ENCODE measurements at regions of chr6 and their contacts with region 1.

Region 1: DNA sequence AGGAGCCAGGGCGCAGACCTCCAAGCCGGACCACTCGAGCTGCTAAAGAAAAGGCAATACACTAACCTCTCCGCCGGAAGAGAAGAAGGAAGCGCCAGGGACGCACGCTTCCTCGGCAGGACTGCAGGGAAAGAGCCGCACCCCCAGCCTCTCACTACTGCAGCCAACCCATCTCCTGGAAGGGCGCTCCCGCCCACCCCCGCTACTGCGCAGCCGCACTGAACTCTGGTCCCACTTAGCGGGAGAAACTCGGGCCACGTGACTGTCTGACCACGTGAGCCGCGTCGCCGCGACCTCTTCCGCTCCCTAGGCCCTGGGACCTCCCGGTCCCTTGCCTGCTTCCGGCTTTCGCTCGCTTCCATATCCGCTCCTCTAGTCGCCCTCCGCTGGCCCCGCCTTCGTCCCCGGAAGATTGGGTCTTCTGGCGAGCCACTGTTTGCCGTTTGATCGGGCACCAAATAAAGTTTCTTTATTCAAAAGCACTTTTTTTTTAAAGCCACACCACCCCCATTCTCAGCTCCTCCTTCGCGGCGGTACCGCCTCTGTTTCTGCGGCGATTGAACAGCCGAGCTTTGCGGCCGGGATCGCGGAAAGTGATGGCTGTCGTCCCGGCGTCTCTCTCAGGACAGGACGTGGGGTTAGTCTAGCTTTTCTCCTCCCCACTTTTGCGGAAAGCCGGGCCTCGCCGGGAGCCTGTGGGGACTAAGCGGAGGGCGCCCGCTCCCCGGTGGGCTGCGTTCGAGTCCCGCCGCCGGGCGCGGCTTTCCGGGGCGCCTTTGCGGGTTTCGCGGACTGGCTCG is at the start of gene RMND1:
- DNase-seq: peak; percentile 92 to 99 (median 99)
- ATAC-seq: peak; percentile 98
- H3K4me3 ChIP-seq: peak within 1 kb of the TSS; percentile 90
- H3K4me3 Mint-ChIP-seq: peak within 1 kb of the TSS; percentile 90 to 98 (median 96)
- H3K27ac ChIP-seq: peak within 1 kb of the TSS; percentile 86
- H3K27ac Mint-ChIP-seq: peak within 1 kb of the TSS; percentile 83 to 98 (median 92)
- H3K4me1 ChIP-seq: peaks cover 15 to 20% of the 10 kb centered on the region in 2 donors
- H3K4me1 Mint-ChIP-seq: peaks cover 36 to 68% (median 54%) of the 10 kb centered on the region in 7 donors
- H3K27me3 ChIP-seq: no peaks in the 10 kb centered on the region
- H3K27me3 Mint-ChIP-seq: peaks cover 0 to 5% (median 0%) of the 10 kb centered on the region in 5 donors
- total RNA-seq, gene RMND1: 8.8 to 21.5 (median 18.7) TPM

Region 2: GRCh38 chr6:149565527-149566409 is 1886.4 kb before region 1 on chr6 and contains the start of gene GINM1:
- CTCF ChIA-PET with region 1: no interaction called
- POLR2A ChIA-PET with region 1: no interaction called
- intact Hi-C with region 1: loop called in 1 of 2 experiments (anchors 5 kb)
- DNase-seq: peak; percentile 92 to 99 (median 96)
- ATAC-seq: peak; percentile 94
- H3K4me3 ChIP-seq: peak within 1 kb of the TSS; percentile 89
- H3K4me3 Mint-ChIP-seq: peak within 1 kb of the TSS; percentile 93 to 99 (median 97)
- H3K27ac ChIP-seq: peak within 1 kb of the TSS; percentile 95
- H3K27ac Mint-ChIP-seq: peak within 1 kb of the TSS; percentile 87 to 97 (median 97)
- H3K4me1 ChIP-seq: peaks cover 0 to 6% of the 10 kb centered on the region in 2 donors
- H3K4me1 Mint-ChIP-seq: peaks cover 3 to 39% (median 19%) of the 10 kb centered on the region in 7 donors
- H3K27me3 ChIP-seq: no peaks in the 10 kb centered on the region
- H3K27me3 Mint-ChIP-seq: peaks cover 0 to 7% (median 0%) of the 10 kb centered on the region in 5 donors
- total RNA-seq, gene GINM1: 14.4 to 27.3 (median 19.9) TPM

Region 3: GRCh38 chr6:150865406-150866146 is 586.6 kb before region 1 on chr6 and contains the start of gene MTHFD1L:
- CTCF ChIA-PET with region 1: no interaction called
- POLR2A ChIA-PET with region 1: no interaction called
- intact Hi-C with region 1: loop called (anchors 1 to 2 kb)
- DNase-seq: peak; percentile 46 to 84 (median 55)
- ATAC-seq: peak; percentile 83
- H3K4me3 ChIP-seq: peak within 1 kb of the TSS; percentile 72
- H3K4me3 Mint-ChIP-seq: peak within 1 kb of the TSS; percentile 83 to 97 (median 88)
- H3K27ac ChIP-seq: peak within 1 kb of the TSS; percentile 61
- H3K27ac Mint-ChIP-seq: peak within 1 kb of the TSS in 8 of 9 donors; percentile 28 to 89 (median 70)
- H3K4me1 ChIP-seq: peaks cover 5 to 6% of the 10 kb centered on the region in 2 donors
- H3K4me1 Mint-ChIP-seq: peaks cover 10 to 44% (median 14%) of the 10 kb centered on the region in 7 donors
- H3K27me3 ChIP-seq: no peaks in the 10 kb centered on the region
- H3K27me3 Mint-ChIP-seq: peaks cover 8 to 18% (median 16%) of the 10 kb centered on the region in 5 donors
- total RNA-seq, gene MTHFD1L: 6.4 to 57.8 (median 9.3) TPM

Region 4: DNA sequence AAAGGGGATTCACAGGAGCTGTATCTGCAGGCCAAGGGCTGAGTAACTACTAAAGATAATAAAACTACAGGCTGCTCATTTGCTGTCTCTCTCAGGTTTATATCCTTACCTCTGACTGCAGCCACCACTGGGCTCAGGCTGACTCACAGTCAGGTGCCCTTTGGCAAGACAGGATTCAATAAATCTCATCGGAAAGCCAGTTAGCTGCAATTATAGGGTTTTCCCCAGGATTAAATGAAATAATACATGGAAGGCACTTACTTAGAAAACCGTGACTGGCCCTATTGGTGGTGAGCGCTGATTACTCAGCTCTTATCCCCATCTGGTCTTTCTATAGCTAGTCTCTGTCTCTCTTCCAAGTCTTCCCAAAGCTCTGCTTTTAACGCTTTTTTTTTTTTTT is 26.6 kb before region 1 on chr6:
- CTCF ChIA-PET with region 1: no interaction called
- POLR2A ChIA-PET with region 1: no interaction called
- intact Hi-C with region 1: no loop called
- DNase-seq: no peak
- ATAC-seq: no peak
- H3K4me3 ChIP-seq: no peak overlapping the region
- H3K4me3 Mint-ChIP-seq: no peak overlapping the region
- H3K27ac ChIP-seq: no peak overlapping the region
- H3K27ac Mint-ChIP-seq: peak overlapping the region in 1 of 9 donors; percentile 58
- H3K4me1 ChIP-seq: no peaks in the 10 kb centered on the region
- H3K4me1 Mint-ChIP-seq: peaks cover 0 to 3% (median 0%) of the 10 kb centered on the region in 7 donors
- H3K27me3 ChIP-seq: no peaks in the 10 kb centered on the region
- H3K27me3 Mint-ChIP-seq: no peaks in the 10 kb centered on the region

Region 5: GRCh38 chr6:151475653-151476523 is 23.7 kb after region 1 on chr6:
- CTCF ChIA-PET with region 1: interaction called, 3 read pairs
- POLR2A ChIA-PET with region 1: no interaction called
- intact Hi-C with region 1: loop called (anchors 2 kb)
- DNase-seq: peak in 7 of 9 donors; percentile 15 to 58 (median 47)
- ATAC-seq: peak; percentile 67
- H3K4me3 ChIP-seq: no peak overlapping the region
- H3K4me3 Mint-ChIP-seq: peak overlapping the region in 5 of 10 donors; percentile 14 to 54 (median 33)
- H3K27ac ChIP-seq: no peak overlapping the region
- H3K27ac Mint-ChIP-seq: peak overlapping the region in 2 of 9 donors; percentile 29 to 32
- H3K4me1 ChIP-seq: peaks cover 0 to 4% of the 10 kb centered on the region in 2 donors
- H3K4me1 Mint-ChIP-seq: peaks cover 0 to 9% (median 5%) of the 10 kb centered on the region in 7 donors
- H3K27me3 ChIP-seq: no peaks in the 10 kb centered on the region
- H3K27me3 Mint-ChIP-seq: no peaks in the 10 kb centered on the region

Region 6: GRCh38 chr6:152225241-152225934 is 773.2 kb after region 1 on chr6:
- CTCF ChIA-PET with region 1: no interaction called
- POLR2A ChIA-PET with region 1: no interaction called
- intact Hi-C with region 1: no loop called
- DNase-seq: no peak
- ATAC-seq: no peak
- H3K4me3 ChIP-seq: no peak overlapping the region
- H3K4me3 Mint-ChIP-seq: no peak overlapping the region
- H3K27ac ChIP-seq: no peak overlapping the region
- H3K27ac Mint-ChIP-seq: peak overlapping the region in 2 of 9 donors; percentile 20 to 62
- H3K4me1 ChIP-seq: no peaks in the 10 kb centered on the region
- H3K4me1 Mint-ChIP-seq: no peaks in the 10 kb centered on the region
- H3K27me3 ChIP-seq: no peaks in the 10 kb centered on the region
- H3K27me3 Mint-ChIP-seq: no peaks in the 10 kb centered on the region

Region 7: GRCh38 chr6:152301764-152302568 is 849.8 kb after region 1 on chr6:
- CTCF ChIA-PET with region 1: no interaction called
- POLR2A ChIA-PET with region 1: no interaction called
- intact Hi-C with region 1: loop called (anchors 1 kb)
- DNase-seq: peak; percentile 76 to 91 (median 87)
- ATAC-seq: peak; percentile 98
- H3K4me3 ChIP-seq: peak overlapping the region; percentile 84
- H3K4me3 Mint-ChIP-seq: peak overlapping the region; percentile 87 to 100 (median 100)
- H3K27ac ChIP-seq: peak overlapping the region; percentile 85
- H3K27ac Mint-ChIP-seq: peak overlapping the region; percentile 92 to 100 (median 99)
- H3K4me1 ChIP-seq: peaks cover 12 to 14% of the 10 kb centered on the region in 2 donors
- H3K4me1 Mint-ChIP-seq: peaks cover 22 to 49% (median 40%) of the 10 kb centered on the region in 7 donors
- H3K27me3 ChIP-seq: no peaks in the 10 kb centered on the region
- H3K27me3 Mint-ChIP-seq: no peaks in the 10 kb centered on the region

Region 8: DNA sequence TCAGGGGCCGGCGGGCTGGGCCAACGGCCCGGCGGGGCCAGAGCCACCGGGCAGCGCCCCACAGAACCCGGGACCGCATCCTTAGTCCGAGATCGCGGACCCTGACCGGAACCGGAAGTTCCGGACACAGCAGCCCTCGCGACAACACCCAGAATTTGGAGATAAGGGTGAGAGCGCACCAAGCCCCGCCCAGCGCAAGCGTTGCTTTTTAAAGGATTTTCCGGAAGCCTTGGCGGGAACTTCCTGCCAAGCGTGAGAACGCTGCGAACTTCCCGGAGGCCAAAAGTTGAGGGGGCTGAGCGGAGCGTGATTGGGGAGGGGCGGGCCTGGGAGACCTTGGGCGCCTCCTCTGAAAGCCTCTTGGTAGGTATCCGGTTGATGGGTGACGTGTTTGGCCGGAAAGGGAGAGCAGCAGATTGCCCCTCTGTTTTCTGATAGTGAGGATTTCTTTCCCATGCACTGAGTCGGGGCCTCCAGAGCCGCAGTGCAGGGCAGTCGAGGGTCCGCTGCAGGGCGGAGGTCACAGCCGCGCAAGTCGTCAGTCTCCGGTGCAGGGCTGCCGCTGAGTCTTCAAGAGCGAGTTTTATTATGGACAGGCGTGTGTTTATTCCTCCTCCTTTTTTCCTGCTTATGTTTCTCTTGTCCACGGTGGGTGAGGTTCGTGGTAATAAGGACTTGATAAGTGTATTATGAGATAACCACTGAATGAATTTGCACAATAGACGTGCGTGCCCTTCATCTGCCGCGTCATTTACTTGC is 1550.6 kb after region 1 on chr6 and contains the start of gene MTRF1L:
- CTCF ChIA-PET with region 1: no interaction called
- POLR2A ChIA-PET with region 1: no interaction called
- intact Hi-C with region 1: loop called (anchors 1 to 5 kb)
- DNase-seq: peak; percentile 52 to 84 (median 70)
- ATAC-seq: peak; percentile 92
- H3K4me3 ChIP-seq: peak within 1 kb of the TSS; percentile 63
- H3K4me3 Mint-ChIP-seq: peak within 1 kb of the TSS; percentile 85 to 99 (median 96)
- H3K27ac ChIP-seq: peak within 1 kb of the TSS; percentile 73
- H3K27ac Mint-ChIP-seq: peak within 1 kb of the TSS; percentile 86 to 98 (median 93)
- H3K4me1 ChIP-seq: peaks cover 18% of the 10 kb centered on the region in 2 donors
- H3K4me1 Mint-ChIP-seq: peaks cover 24 to 59% (median 49%) of the 10 kb centered on the region in 7 donors
- H3K27me3 ChIP-seq: no peaks in the 10 kb centered on the region
- H3K27me3 Mint-ChIP-seq: peaks cover 0 to 18% (median 0%) of the 10 kb centered on the region in 5 donors
- total RNA-seq, gene MTRF1L: 8.9 to 18.1 (median 13.5) TPM